Mammary epithelial cell (primary cell): ENCODE measurements at regions of chr17 and their contacts with region 1.

Region 1: DNA sequence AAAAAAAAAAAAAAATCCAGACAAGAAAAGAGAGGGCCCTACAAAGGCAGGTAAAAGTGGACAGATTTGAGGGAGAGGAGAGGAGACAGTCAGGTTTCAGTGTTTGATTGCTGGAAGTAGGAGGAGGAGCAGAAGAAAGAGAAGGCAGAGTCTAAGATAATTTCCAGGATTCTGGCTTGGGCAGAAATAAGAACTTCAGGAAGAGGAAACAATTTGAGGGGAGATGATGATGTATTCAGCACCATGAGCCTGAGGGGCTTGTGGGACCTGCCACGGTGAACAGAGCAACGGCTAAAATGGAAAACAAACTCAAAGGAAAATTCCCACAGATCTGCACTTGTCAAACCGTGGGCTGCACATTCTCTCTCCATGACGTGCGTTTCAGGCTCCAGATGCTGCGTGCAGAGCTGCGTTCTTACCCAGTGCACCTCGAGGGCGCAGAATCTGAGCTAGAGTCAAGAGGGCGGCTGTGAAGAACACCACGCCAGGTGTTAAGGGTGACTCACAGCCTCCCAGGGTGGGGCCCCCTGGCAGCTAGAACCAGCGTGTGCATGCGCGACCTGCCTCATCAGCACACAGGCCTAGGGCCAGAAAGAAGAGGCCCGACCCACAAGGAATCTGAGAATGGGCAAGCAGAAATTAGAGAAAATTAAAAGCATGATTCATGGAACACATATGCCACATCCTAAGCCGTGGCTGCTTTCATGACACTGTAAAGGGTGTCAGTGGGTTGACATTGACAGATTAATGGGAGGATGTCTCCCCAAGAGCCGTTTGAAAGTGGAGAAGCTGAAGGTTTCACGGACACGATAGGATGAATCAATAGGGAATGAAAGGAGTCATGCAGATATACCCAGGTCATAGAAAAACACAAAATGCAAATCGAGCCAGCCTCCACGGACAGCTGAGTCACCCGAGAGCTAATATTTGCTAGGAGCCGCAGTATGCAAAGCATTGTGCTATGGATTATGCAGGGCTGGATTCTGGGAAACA is 29.1 kb downstream of the MARCHF10 start:
- DNase-seq: peak; percentile 99
- H3K4me3 ChIP-seq: peak overlapping the region in 2 of 3 experiments; percentile 7 to 22
- H3K27ac ChIP-seq: peak overlapping the region; percentile 96
- H3K4me1 ChIP-seq: peaks cover 41% of the 10 kb centered on the region
- H3K27me3 ChIP-seq: no peaks in the 10 kb centered on the region
- CTCF ChIP-seq: no peak

Region 2: GRCh38 chr17:62732125-62732524 is 46.9 kb before region 1 on chr17:
- CTCF ChIA-PET with region 1: no interaction called
- dilution Hi-C with region 1: no loop called
- in situ Hi-C with region 1: no loop called
- intact Hi-C with region 1: loop called (anchors 5 kb)
- DNase-seq: peak; percentile 82
- H3K4me3 ChIP-seq: no peak overlapping the region
- H3K27ac ChIP-seq: peak overlapping the region; percentile 40
- H3K4me1 ChIP-seq: peaks cover 21% of the 10 kb centered on the region
- H3K27me3 ChIP-seq: no peaks in the 10 kb centered on the region
- CTCF ChIP-seq: no peak

Region 3: GRCh38 chr17:62761917-62762316 is 17.1 kb before region 1 on chr17:
- CTCF ChIA-PET with region 1: no interaction called
- dilution Hi-C with region 1: no loop called
- in situ Hi-C with region 1: no loop called
- intact Hi-C with region 1: loop called (anchors 2 kb)
- DNase-seq: peak; percentile 95
- H3K4me3 ChIP-seq: no peak overlapping the region
- H3K27ac ChIP-seq: no peak overlapping the region
- H3K4me1 ChIP-seq: peaks cover 12% of the 10 kb centered on the region
- H3K27me3 ChIP-seq: no peaks in the 10 kb centered on the region
- CTCF ChIP-seq: no peak

Region 4: GRCh38 chr17:62819475-62820212 is 40.7 kb after region 1 on chr17:
- CTCF ChIA-PET with region 1: no interaction called
- dilution Hi-C with region 1: no loop called
- in situ Hi-C with region 1: no loop called
- intact Hi-C with region 1: loop called (anchors 2 kb)
- DNase-seq: peak; percentile 98
- H3K4me3 ChIP-seq: peak overlapping the region in 2 of 3 experiments; percentile 5 to 20
- H3K27ac ChIP-seq: peak overlapping the region; percentile 97
- H3K4me1 ChIP-seq: peaks cover 59% of the 10 kb centered on the region
- H3K27me3 ChIP-seq: no peaks in the 10 kb centered on the region
- CTCF ChIP-seq: no peak

Region 5: DNA sequence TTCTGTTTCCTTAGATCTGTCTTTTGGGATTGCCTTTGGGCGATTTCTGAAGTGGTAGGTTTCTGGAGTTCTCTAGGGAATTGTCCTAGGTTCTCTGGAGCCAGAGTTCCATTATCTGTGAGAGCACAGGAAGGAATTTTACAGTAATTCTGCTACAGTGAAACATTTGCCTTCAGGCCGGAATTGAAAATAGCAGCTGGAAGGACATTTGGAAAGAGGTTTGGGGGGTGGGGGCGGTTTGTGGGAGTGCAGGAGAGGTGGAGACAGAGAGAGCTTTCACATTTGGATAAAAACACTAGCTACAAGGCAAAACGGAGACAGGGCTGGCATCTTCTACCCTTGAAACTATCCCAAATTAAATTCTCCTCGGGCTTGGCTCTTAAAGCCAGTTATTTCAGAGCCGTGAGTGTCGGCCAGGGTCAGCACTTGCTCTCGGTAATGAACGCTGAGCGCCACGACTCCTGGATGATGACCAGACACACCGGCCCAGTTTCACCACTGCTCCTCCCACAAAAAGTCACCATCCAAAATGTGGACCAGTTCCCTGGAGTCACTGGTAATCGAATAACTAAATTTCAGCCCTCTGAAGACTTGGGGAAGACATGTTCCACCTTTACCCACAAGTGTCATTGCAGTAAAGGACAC is 119.4 kb after region 1 on chr17:
- CTCF ChIA-PET with region 1: no interaction called
- dilution Hi-C with region 1: no loop called
- in situ Hi-C with region 1: no loop called
- intact Hi-C with region 1: loop called (anchors 5 kb)
- DNase-seq: no peak
- H3K4me3 ChIP-seq: no peak overlapping the region
- H3K27ac ChIP-seq: no peak overlapping the region
- H3K4me1 ChIP-seq: peaks cover 25% of the 10 kb centered on the region
- H3K27me3 ChIP-seq: no peaks in the 10 kb centered on the region
- CTCF ChIP-seq: no peak